ENCODE measurements at regions of chr10 and their contacts with region 1.

Region 1: GRCh38 chr10:104903433-104903832 is 262.3 kb downstream of the SORCS3 start:
- DNase-seq: no peak
- ATAC-seq: no peak
- H3K4me3 ChIP-seq: no peak overlapping the region
- H3K27ac ChIP-seq: no peak overlapping the region
- H3K4me1 ChIP-seq: no peaks in the 10 kb centered on the region
- H3K27me3 ChIP-seq: peaks cover 0 to 12% (median 0%) of the 10 kb centered on the region in 9 donors
- CTCF ChIP-seq: no peak
- POLR2A ChIP-seq: no peak

Region 2: GRCh38 chr10:104784452-104784851 is 119.0 kb before region 1 on chr10:
- intact Hi-C with region 1: loop called in 1 of 10 experiments (anchors 10 kb)
- DNase-seq: no peak
- ATAC-seq: no peak
- H3K4me3 ChIP-seq: no peak overlapping the region
- H3K27ac ChIP-seq: no peak overlapping the region
- H3K4me1 ChIP-seq: no peaks in the 10 kb centered on the region
- H3K27me3 ChIP-seq: peaks cover 0 to 4% (median 0%) of the 10 kb centered on the region in 9 donors
- CTCF ChIP-seq: no peak
- POLR2A ChIP-seq: no peak

Region 3: DNA sequence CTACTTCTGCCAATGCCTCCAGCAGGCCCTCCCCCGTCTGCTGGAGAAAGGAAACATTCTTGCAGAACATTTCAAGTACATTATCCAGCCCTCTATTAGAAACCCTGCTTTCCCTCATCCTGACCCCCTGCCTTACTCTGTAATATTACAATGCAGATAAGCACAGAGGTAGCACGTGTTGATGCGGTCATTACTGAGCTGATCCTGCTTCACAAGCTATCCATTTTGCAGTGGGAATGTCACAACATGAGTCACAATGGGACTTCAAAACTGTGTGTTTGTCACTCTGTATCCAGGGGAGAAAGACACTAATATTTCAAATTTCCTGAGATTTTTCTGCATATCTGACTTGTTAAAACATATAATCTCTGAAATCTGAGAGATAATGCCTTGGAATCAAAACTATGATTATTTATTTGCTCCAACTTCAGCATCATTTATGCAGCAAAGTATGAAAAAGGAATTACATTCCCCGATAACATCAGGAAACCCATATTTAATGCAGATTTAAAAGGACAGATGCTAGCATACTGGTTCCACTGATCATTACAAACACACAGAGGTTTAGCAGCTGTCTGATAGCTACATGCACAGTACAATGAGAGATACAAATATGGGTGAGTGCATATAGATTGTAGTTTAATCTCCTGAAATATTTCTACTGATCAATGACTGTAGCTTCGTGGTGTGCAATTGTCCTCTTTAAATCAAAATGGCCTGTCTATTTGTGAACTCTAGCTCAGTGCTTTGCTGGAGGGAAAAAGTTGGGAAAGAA is 22.6 kb before region 1 on chr10:
- intact Hi-C with region 1: no loop called
- DNase-seq: no peak
- ATAC-seq: no peak
- H3K4me3 ChIP-seq: no peak overlapping the region
- H3K27ac ChIP-seq: no peak overlapping the region
- H3K4me1 ChIP-seq: no peaks in the 10 kb centered on the region
- H3K27me3 ChIP-seq: peaks cover 0 to 10% (median 0%) of the 10 kb centered on the region in 9 donors
- CTCF ChIP-seq: no peak
- POLR2A ChIP-seq: no peak

Measured in heart left ventricle (tissue), 16 donors.